Activated B cell treated with CpG ODN at 0.5 μM for 24 hours (primary cell): ENCODE measurements at regions of chr1 and their contacts with region 1.

Region 1: DNA sequence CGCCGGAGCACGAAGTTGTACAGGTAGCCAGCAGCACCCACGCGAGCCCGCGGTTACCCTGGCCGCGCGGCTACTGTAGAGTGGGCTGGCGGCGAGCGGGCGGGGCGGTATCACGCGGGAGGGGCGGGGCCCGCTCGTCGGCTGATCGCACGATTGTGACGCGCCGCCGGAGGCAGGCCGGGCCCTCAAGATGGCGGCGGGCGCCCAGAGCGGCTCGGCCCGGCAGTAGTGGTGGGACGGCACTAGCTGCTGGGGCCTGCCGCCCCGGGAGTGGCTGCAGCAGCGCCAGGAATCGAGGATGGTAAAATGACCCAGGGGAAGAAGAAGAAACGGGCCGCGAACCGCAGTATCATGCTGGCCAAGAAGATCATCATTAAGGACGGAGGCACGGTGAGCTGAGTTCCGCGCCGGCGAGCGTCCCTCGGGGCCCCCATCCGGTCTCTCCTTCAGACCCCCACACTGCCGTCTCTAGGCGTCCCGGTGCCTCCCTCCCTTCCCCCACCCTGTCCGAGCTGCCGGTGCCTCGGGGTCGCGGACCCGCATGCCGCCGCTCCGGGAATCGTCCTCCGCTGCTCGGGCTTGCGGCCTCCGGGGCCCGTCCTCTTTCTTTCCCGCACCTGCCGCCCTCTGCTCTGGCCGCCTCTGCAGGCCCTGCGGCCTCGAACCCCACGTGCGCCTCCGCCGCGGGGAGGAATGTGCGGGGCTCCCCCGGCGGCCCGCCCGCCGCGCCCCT is 68.3 kb downstream of the SLC35A3 start:
- DNase-seq: peak; percentile 85
- ATAC-seq: peak; percentile 92
- H3K4me3 Mint-ChIP-seq: peak overlapping the region; percentile 98
- H3K27ac Mint-ChIP-seq: peak overlapping the region; percentile 98
- H3K4me1 Mint-ChIP-seq: peaks cover 56% of the 10 kb centered on the region
- H3K27me3 Mint-ChIP-seq: no peaks in the 10 kb centered on the region
- CTCF ChIP-seq: no peak

Region 2: DNA sequence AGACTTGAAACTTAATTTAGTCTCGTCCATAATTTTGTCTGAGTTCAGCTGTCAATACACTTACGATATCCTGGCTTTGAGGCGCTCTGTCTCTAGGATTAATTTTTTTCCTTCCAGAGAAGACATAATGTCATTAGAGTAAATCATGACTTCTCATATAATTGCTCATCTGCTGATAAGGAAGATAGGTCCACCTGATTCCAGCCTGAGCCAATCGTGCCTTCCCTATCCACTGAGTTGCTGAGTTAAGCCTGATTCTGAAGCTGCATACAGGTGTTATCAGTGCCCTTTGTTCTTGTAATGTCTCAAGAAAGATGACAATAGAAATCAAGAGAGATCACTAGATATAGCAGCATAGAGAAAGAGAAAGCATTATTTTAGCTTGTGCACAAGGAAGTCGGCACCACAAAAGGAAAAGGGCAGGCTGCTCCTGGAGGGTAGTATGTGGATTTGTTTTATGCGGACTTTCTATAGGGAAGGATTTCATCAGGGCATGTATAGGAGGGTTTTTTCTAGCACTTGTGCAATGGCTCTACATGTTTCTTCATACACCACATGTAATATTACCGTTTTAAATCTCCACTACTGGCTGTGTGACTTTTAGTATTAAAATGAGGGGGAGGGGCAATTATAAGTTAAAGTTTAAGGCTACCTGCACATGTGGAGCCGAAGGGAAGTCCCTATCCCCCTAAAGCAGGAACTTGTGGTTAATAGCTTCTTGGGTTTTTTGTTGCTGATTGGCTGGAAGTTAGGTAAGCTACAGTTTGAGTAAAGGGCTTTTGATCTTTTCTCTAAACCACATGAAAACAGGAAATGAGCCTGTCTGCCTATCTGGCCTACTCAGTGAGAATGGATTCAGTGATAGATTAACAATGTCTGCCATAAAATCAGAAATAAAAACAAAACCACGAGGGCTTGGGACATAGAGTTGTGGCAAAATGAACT is 1166.9 kb before region 1 on chr1:
- CTCF ChIA-PET with region 1: no interaction called
- POLR2A ChIA-PET with region 1: no interaction called
- intact Hi-C with region 1: loop called (anchors 5 kb)
- DNase-seq: no peak
- ATAC-seq: peak; percentile 95
- H3K4me3 Mint-ChIP-seq: peak overlapping the region; percentile 74
- H3K27ac Mint-ChIP-seq: peak overlapping the region; percentile 89
- H3K4me1 Mint-ChIP-seq: peaks cover 22% of the 10 kb centered on the region
- H3K27me3 Mint-ChIP-seq: no peaks in the 10 kb centered on the region
- CTCF ChIP-seq: no peak

Region 3: DNA sequence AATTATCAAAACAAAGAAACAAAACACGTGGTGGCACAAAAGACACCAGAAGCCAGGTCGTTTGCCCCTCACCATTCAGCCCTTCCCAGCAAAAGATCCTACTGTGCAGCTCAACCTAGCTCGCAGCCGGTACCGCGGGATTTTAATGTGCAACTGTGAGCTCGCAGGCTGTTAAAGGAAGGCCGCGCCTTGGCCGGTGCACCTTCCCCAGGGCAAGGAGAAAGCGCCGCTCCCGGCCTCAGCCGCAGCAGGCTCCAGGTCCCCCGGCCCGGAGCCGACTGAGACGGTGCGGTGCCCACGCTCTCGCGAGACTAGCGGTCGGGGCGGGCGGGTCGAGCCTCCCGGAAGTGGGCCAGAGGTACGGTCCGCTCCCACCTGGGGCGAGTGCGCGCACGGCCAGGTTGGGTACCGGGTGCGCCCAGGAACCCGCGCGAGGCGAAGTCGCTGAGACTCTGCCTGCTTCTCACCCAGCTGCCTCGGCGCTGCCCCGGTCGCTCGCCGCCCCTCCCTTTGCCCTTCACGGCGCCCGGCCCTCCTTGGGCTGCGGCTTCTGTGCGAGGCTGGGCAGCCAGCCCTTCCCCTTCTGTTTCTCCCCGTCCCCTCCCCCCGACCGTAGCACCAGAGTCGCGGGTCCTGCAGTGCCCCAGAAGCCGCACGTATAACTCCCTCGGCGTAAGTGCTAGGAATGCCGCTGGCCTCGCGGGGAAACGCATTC is 188.2 kb before region 1 on chr1 and contains the start of gene AGL:
- CTCF ChIA-PET with region 1: no interaction called
- POLR2A ChIA-PET with region 1: interaction called, 7 read pairs
- intact Hi-C with region 1: loop called (anchors 1 kb)
- DNase-seq: peak; percentile 82
- ATAC-seq: peak; percentile 95
- H3K4me3 Mint-ChIP-seq: peak within 1 kb of the TSS; percentile 97
- H3K27ac Mint-ChIP-seq: peak within 1 kb of the TSS; percentile 89
- H3K4me1 Mint-ChIP-seq: peaks cover 26% of the 10 kb centered on the region
- H3K27me3 Mint-ChIP-seq: no peaks in the 10 kb centered on the region
- CTCF ChIP-seq: no peak
- total RNA-seq, gene AGL: 19.6 and 21.8 TPM in 2 replicates

Region 4: GRCh38 chr1:100051401-100051800 is 13.3 kb after region 1 on chr1:
- CTCF ChIA-PET with region 1: no interaction called
- POLR2A ChIA-PET with region 1: interaction called, 16 read pairs
- intact Hi-C with region 1: loop called (anchors 1 kb)
- DNase-seq: no peak
- ATAC-seq: no peak
- H3K4me3 Mint-ChIP-seq: no peak overlapping the region
- H3K27ac Mint-ChIP-seq: no peak overlapping the region
- H3K4me1 Mint-ChIP-seq: peaks cover 55% of the 10 kb centered on the region
- H3K27me3 Mint-ChIP-seq: no peaks in the 10 kb centered on the region
- CTCF ChIP-seq: no peak

Region 5: DNA sequence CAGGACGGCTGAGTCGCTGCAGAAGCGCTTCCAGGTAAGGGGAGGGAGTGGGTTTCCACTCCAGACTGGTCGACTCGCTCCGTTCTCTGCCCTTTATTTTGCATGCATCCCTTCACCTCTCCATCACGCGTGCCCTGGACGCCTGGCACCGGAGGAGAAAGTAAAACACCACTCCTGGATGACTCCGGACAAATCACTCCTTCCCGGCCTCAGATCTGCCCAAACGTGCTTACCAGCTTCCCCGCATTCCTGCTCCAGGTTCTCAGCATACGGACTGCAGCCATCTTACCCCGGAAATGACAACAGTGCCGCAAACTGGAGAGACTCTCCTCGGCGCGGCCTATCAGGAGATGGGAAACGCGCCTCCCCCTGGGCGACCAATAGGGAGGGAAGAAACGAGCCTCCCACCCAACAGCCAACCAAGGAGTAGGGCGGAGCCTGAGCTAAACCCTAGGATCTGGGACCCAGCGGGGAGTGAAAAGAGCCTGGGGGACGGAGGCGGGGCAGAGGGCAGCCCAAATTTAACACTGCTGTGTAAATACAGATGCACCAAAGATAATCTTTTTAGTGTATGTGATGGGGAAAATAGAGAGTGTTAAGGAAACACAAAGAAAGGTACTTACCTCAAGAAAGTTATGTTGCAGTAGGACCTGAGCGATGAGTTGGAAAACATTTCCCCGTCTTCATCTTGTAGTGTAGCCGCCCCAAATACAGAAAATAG is 211.6 kb after region 1 on chr1 and contains the start of gene DBT:
- CTCF ChIA-PET with region 1: no interaction called
- POLR2A ChIA-PET with region 1: interaction called, 6 read pairs
- intact Hi-C with region 1: loop called (anchors 1 kb)
- DNase-seq: peak; percentile 77
- ATAC-seq: peak; percentile 100
- H3K4me3 Mint-ChIP-seq: no peak within 1 kb of the TSS
- H3K27ac Mint-ChIP-seq: no peak within 1 kb of the TSS
- H3K4me1 Mint-ChIP-seq: peaks cover 7% of the 10 kb centered on the region
- H3K27me3 Mint-ChIP-seq: no peaks in the 10 kb centered on the region
- CTCF ChIP-seq: no peak
- total RNA-seq, gene DBT: 9.8 and 11.6 TPM in 2 replicates

Region 6: GRCh38 chr1:100351095-100351891 is 313.2 kb after region 1 on chr1:
- CTCF ChIA-PET with region 1: no interaction called
- POLR2A ChIA-PET with region 1: interaction called, 3 read pairs
- intact Hi-C with region 1: loop called (anchors 1 kb)
- DNase-seq: peak; percentile 78
- ATAC-seq: peak; percentile 66
- H3K4me3 Mint-ChIP-seq: peak overlapping the region; percentile 99
- H3K27ac Mint-ChIP-seq: peak overlapping the region; percentile 96
- H3K4me1 Mint-ChIP-seq: peaks cover 35% of the 10 kb centered on the region
- H3K27me3 Mint-ChIP-seq: no peaks in the 10 kb centered on the region
- CTCF ChIP-seq: no peak